K562 (cell line): ENCODE measurements at regions of chr2 and their contacts with region 1.

Region 1: DNA sequence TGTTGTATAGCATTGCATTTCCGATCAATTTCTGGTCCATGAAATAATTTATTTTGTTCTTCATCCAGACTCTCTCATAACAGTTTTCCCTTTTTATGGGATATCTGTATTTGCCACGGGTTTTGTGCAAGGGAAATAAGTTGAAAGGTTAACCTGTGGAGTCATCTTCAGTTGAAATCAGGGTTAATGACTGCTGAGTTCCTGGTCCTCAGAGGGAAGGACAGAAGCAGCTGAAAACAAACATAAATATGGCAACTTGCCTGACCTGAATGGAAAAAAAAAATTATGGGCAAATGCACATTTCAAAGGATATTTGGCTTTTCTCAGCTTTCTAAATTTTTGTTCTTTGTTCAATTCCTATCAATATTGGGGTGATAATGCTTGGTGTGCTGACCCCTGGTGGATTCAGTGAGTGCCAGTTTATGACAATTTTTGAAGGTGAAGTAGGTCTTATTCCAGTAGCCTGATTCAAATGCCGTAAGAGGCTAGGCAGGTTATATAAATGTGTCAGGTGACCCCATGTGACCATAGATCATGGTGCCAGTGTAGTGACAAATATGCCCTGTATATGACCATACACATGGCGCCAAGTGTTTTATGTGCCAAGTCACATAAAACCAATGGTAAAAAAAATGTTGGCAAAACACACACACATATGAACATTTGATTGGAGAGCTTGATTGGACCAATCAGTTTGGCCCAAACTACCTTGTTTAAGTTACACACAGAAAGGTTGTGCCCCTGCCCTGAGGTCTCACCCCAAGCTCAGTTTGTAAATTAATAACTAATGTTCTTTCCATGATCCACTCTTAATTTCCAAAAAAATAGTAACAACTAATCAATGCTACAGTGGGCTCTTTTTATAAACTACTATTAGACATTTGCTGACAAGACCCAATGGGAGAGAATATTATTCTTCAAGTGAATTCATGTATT is 47.6 kb upstream of the FAM124B start:
- DNase-seq: peak in 2 of 4 experiments; percentile 14 to 22
- ATAC-seq: peak; percentile 60
- H3K4me3 ChIP-seq: no peak overlapping the region
- H3K27ac ChIP-seq: no peak overlapping the region
- H3K4me1 ChIP-seq: no peaks in the 10 kb centered on the region
- H3K27me3 ChIP-seq: no peaks in the 10 kb centered on the region
- CTCF ChIP-seq: peak; percentile 29 to 56 (median 50); a peak in 5 of 6 replicates
- EP300 ChIP-seq: no peak
- POLR2A ChIP-seq: no peak
- RAD21 ChIP-seq: peak; percentile 19 to 57; a peak in 2 of 4 replicates

Region 2: DNA sequence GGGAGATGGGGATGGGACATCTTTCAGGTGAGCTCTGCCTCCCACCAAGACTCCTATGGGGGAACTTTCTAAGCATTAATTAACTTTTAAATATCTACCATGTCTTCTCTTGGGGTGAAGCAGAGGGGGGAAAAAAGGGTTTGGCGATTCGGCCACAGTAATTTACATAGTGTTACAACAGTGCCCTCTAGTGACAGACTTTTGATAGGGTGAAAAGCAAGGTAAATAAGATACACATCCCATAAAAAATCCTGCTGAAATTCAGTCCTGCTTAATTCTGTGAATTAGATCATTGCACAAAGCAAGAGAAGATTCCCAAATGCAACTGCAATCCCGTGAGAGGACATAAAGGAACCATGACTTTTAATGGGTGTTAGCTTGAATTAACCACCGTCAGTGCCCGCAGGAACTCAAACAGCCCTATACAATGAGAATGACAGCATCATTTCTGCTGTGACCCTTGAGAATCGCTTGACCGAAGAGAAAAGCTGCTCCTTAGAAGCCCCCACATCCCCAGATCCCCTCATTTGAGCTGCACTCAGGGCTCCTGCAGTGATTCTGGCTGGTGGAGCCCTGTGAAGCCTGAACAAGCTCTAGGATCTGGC is 80.3 kb before region 1 on chr2:
- CTCF ChIA-PET with region 1: no interaction called
- POLR2A ChIA-PET with region 1: no interaction called
- in situ Hi-C with region 1: loop called (anchors 10 kb)
- intact Hi-C with region 1: no loop called
- DNase-seq: peak in 3 of 4 experiments; percentile 22 to 59 (median 24)
- ATAC-seq: peak; percentile 80
- H3K4me3 ChIP-seq: no peak overlapping the region
- H3K27ac ChIP-seq: no peak overlapping the region
- H3K4me1 ChIP-seq: no peaks in the 10 kb centered on the region
- H3K27me3 ChIP-seq: no peaks in the 10 kb centered on the region
- CTCF ChIP-seq: peak; percentile 44 to 57 (median 51); a peak in 5 of 6 replicates
- EP300 ChIP-seq: no peak
- POLR2A ChIP-seq: no peak
- RAD21 ChIP-seq: peak; percentile 25 to 46; a peak in 3 of 4 replicates

Region 3: GRCh38 chr2:224461391-224461790 is 11.9 kb after region 1 on chr2:
- CTCF ChIA-PET with region 1: no interaction called
- POLR2A ChIA-PET with region 1: no interaction called
- in situ Hi-C with region 1: no loop called
- intact Hi-C with region 1: no loop called
- DNase-seq: no peak
- ATAC-seq: no peak
- H3K4me3 ChIP-seq: no peak overlapping the region
- H3K27ac ChIP-seq: no peak overlapping the region
- H3K4me1 ChIP-seq: no peaks in the 10 kb centered on the region
- H3K27me3 ChIP-seq: no peaks in the 10 kb centered on the region
- CTCF ChIP-seq: no peak
- EP300 ChIP-seq: no peak
- POLR2A ChIP-seq: no peak
- RAD21 ChIP-seq: no peak

Region 4: DNA sequence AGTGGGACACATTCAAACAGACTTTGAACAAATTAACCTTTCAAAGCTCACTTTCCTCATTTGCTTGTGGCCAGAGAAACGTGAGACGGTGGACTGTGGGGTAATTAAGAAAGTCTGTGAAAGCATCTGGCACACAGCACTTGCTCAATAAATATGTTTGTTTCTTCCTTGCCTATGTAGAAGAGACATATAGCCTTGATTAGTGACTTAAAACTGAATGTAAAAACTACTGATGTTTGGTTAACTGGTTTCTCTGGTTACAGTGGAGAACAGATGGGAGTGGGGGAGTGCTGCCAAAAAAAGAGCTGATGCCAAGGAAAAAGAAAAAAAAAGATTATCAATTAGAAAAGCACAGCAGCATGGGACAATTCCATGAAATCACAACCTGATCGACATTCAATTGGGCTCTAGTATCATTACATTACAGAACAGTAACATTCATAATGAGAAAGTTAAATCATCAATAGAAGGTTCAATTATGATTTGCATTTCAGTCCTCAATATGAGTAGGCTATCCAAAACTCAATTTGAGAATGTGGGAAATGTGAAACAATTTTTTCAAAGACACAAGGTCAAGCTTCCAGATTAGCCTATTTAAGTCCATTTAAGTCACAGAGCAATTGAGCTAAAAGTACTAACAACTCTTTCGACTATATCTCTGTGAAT is 121.0 kb after region 1 on chr2:
- CTCF ChIA-PET with region 1: no interaction called
- POLR2A ChIA-PET with region 1: no interaction called
- in situ Hi-C with region 1: no loop called
- intact Hi-C with region 1: no loop called
- DNase-seq: no peak
- ATAC-seq: no peak
- H3K4me3 ChIP-seq: no peak overlapping the region
- H3K27ac ChIP-seq: 0 out of 3 replicates have a peak overlapping the region, but pooled peaks have one; percentile 15
- H3K4me1 ChIP-seq: peaks cover 0 to 4% of the 10 kb centered on the region in 2 experiments; a peak in 3 of 5 replicates
- H3K27me3 ChIP-seq: no peaks in the 10 kb centered on the region
- CTCF ChIP-seq: no peak
- EP300 ChIP-seq: no peak
- POLR2A ChIP-seq: no peak
- RAD21 ChIP-seq: no peak

Region 5: GRCh38 chr2:224650815-224651439 is 201.4 kb after region 1 on chr2:
- CTCF ChIA-PET with region 1: no interaction called
- POLR2A ChIA-PET with region 1: no interaction called
- in situ Hi-C with region 1: no loop called
- intact Hi-C with region 1: loop called (anchors 5 kb)
- DNase-seq: peak; percentile 28 to 53 (median 33)
- ATAC-seq: peak; percentile 88
- H3K4me3 ChIP-seq: no peak overlapping the region
- H3K27ac ChIP-seq: no peak overlapping the region
- H3K4me1 ChIP-seq: no peaks in the 10 kb centered on the region; a peak in 1 of 5 replicates
- H3K27me3 ChIP-seq: no peaks in the 10 kb centered on the region
- CTCF ChIP-seq: peak; percentile 46 to 72 (median 63); a peak in 5 of 6 replicates
- EP300 ChIP-seq: no peak
- POLR2A ChIP-seq: no peak
- RAD21 ChIP-seq: peak; percentile 69 to 80